Vagina (tissue), 2 donors: ENCODE measurements at regions of chr20 and their contacts with region 1.

Region 1: GRCh38 chr20:47929363-47930123 is 144.3 kb upstream of the SULF2 start:
- DNase-seq: no peak
- H3K4me3 ChIP-seq: no peak overlapping the region
- H3K27ac ChIP-seq: peak overlapping the region; percentile 62
- H3K4me1 ChIP-seq: peaks cover 8% of the 10 kb centered on the region
- H3K27me3 ChIP-seq: no peaks in the 10 kb centered on the region
- CTCF ChIP-seq: no peak
- POLR2A ChIP-seq: no peak

Region 2: GRCh38 chr20:47821481-47822439 is 107.8 kb before region 1 on chr20:
- intact Hi-C with region 1: no loop called
- DNase-seq: no peak
- H3K4me3 ChIP-seq: no peak overlapping the region
- H3K27ac ChIP-seq: no peak overlapping the region
- H3K4me1 ChIP-seq: no peaks in the 10 kb centered on the region
- H3K27me3 ChIP-seq: no peaks in the 10 kb centered on the region
- CTCF ChIP-seq: no peak
- POLR2A ChIP-seq: no peak

Region 3: GRCh38 chr20:47875714-47875998 is 53.9 kb before region 1 on chr20:
- intact Hi-C with region 1: no loop called
- DNase-seq: no peak
- H3K4me3 ChIP-seq: no peak overlapping the region
- H3K27ac ChIP-seq: no peak overlapping the region
- H3K4me1 ChIP-seq: no peaks in the 10 kb centered on the region
- H3K27me3 ChIP-seq: no peaks in the 10 kb centered on the region
- CTCF ChIP-seq: no peak
- POLR2A ChIP-seq: no peak

Region 4: DNA sequence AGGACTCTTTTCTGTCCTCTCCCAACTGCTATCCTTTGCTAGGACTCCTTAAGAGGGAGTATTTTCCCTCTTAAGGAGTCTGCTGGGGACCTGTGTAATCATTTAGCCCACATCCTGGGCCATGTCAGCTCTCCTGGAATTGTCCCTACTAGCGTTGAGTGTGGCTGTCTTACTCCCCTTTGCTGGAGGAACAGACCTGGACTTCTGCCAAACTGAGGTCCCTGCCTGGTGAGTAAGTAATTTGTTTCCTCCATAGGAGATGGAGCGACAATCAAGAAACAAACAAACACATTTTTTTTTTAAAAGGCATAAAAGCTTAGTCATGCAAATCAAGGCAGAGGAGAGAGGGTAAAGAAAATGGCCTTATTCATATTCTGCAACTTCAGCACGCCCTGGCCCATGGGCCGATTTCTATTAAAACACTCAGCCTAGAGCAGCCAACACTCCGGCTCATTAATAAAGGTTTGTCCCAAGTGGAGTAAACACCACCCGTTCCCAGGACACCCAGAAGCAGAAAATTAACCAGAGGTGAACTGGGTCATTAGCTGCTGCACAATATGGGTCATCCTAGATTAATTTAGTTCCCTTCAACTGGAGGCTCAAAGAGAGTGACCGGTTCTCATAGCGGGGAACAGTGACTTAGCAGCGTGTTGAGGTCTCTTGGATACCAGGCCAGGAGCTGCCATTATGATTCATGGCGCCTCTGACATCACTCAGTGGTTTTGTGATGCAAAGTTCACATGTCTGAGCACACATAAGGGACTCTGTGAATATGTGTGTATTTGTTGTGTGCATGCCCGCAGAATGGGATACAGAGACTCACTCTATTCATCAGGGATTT is 20.8 kb after region 1 on chr20:
- intact Hi-C with region 1: no loop called
- DNase-seq: no peak
- H3K4me3 ChIP-seq: no peak overlapping the region
- H3K27ac ChIP-seq: no peak overlapping the region
- H3K4me1 ChIP-seq: peaks cover 16% of the 10 kb centered on the region
- H3K27me3 ChIP-seq: no peaks in the 10 kb centered on the region
- CTCF ChIP-seq: no peak
- POLR2A ChIP-seq: no peak

Region 5: DNA sequence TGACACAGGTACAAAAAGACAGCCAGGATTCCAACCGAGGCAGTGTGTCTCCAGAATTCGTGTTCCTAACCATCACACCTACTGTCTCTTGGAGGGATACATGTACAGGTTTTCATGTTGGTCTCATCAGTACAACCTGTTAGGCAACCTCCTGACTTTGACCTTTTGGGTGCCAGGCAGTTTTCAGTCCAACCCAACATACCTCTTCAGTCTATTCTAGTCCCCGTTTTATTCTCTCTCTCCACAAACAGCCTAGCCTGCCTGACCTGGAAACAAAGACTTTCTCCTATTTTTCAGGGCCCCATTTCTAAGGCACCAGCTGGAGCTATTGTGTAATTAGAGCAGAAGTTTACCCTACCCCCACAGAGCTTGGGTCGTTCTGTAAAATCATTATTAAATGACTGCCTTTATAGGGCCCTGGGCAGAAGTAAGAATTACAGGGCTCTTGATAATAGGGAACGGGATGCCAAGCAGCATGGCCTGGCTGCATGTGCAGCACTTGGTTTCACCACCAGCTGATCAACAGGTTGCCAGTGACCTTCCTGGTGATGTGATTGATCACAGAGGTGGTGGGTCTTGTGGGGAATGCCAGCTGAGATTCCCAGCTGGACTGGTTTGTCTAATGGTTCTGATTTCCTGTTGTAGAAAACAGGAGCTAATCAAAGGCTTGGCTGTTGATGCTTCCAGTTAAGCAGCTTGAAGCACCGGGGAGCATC is 183.5 kb after region 1 on chr20:
- intact Hi-C with region 1: no loop called
- DNase-seq: no peak
- H3K4me3 ChIP-seq: no peak overlapping the region
- H3K27ac ChIP-seq: no peak overlapping the region
- H3K4me1 ChIP-seq: no peaks in the 10 kb centered on the region
- H3K27me3 ChIP-seq: no peaks in the 10 kb centered on the region
- CTCF ChIP-seq: no peak
- POLR2A ChIP-seq: no peak

Region 6: GRCh38 chr20:49303065-49303552 is 1373.6 kb after region 1 on chr20:
- intact Hi-C with region 1: loop called (anchors 5 kb)
- DNase-seq: no peak
- H3K4me3 ChIP-seq: no peak overlapping the region
- H3K27ac ChIP-seq: no peak overlapping the region
- H3K4me1 ChIP-seq: peaks cover 9% of the 10 kb centered on the region
- H3K27me3 ChIP-seq: no peaks in the 10 kb centered on the region
- CTCF ChIP-seq: no peak
- POLR2A ChIP-seq: no peak